ENCODE measurements at regions of chr6 and their contacts with region 1.

Region 1: GRCh38 chr6:53718597-53719460 is 53.3 kb upstream of the KLHL31 start:
- DNase-seq: no peak
- ATAC-seq: peak; percentile 75

Region 2: GRCh38 chr6:52995913-52996645 is 722.8 kb before region 1 on chr6:
- intact Hi-C with region 1: no loop called
- DNase-seq: no peak
- ATAC-seq: no peak

Region 3: GRCh38 chr6:53664623-53665022 is 54.2 kb before region 1 on chr6:
- intact Hi-C with region 1: loop called (anchors 5 kb)
- DNase-seq: no peak
- ATAC-seq: peak; percentile 86

Region 4: DNA sequence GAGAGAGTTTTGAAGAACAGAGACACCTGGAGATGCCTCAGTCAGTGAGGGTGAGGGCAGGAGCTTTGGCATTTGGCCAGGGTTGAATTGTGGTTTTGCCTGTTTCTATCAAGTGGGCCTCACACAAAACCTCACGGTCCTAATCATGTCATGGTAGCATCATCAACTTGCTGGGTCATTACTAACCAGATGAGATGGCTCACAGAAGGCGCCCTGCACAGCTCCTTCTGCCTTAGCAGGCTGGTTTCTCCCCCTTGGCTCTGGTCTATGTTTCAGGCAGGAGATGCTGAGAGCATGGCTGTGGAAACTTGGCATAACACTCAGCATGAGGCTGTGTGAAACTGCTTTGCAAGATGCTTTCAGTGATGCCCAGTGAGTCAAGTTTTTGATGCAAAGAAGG is 175.3 kb after region 1 on chr6:
- intact Hi-C with region 1: no loop called
- DNase-seq: no peak
- ATAC-seq: no peak